ENCODE measurements at regions of chr5 and their contacts with region 1.

Region 1: DNA sequence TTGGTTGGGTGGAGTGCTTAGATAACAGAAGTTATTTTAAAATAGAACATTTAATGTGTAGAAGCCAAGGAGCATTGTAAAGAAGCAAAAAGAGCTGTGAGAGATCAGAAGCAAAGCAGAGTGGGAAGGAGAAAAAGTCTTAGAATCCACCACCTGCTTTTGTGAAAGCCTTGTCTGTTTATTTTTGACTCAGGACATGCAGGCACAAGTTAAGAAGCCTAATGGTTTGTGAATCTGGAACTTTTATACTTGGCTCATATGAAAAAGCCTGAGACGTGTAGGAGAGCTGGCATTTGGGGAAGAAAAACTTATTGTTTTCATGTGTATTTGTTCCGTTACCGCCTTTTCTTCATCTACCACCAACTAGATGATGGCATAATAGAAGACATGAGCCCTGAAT is 38.5 kb upstream of the ITGA2 start:
- DNase-seq: no peak
- H3K4me3 ChIP-seq: no peak overlapping the region
- H3K27ac ChIP-seq: no peak overlapping the region
- H3K4me1 ChIP-seq: no peaks in the 10 kb centered on the region
- H3K27me3 ChIP-seq: no peaks in the 10 kb centered on the region
- CTCF ChIP-seq: no peak

Region 2: GRCh38 chr5:53095931-53096525 is 145.3 kb after region 1 on chr5:
- intact Hi-C with region 1: loop called (anchors 2 kb)
- DNase-seq: peak; percentile 74
- H3K4me3 ChIP-seq: no peak overlapping the region
- H3K27ac ChIP-seq: no peak overlapping the region
- H3K4me1 ChIP-seq: no peaks in the 10 kb centered on the region
- H3K27me3 ChIP-seq: no peaks in the 10 kb centered on the region
- CTCF ChIP-seq: peak; percentile 83

Region 3: GRCh38 chr5:53601570-53601969 is 650.9 kb after region 1 on chr5:
- intact Hi-C with region 1: no loop called
- DNase-seq: no peak
- H3K4me3 ChIP-seq: no peak overlapping the region
- H3K27ac ChIP-seq: no peak overlapping the region
- H3K4me1 ChIP-seq: no peaks in the 10 kb centered on the region
- H3K27me3 ChIP-seq: no peaks in the 10 kb centered on the region
- CTCF ChIP-seq: no peak